Thyroid gland (tissue), 4 donors: ENCODE measurements at regions of chr13 and their contacts with region 1.

Region 1: DNA sequence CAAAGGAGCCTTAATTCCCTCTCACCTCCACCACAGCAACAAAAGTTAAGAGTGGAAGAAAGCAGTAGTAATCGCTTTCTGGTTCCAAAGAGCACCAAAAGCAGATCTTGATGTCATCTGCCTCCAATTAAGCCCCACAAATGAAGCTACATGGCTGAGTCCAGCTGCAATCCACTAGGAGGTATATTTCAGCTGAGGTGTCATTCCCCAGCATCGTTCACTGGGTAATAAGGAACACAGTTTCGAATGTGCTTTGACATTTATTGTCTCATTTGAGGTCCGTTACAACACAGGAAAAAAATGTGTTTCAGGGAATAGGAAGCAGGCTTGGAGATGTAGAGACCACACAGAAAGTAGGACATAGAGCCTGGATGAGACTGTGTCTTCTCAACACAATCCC is 190.4 kb downstream of the DCLK1 start:
- DNase-seq: no peak
- H3K4me3 ChIP-seq: no peak overlapping the region
- H3K27ac ChIP-seq: no peak overlapping the region
- H3K4me1 ChIP-seq: no peaks in the 10 kb centered on the region
- H3K27me3 ChIP-seq: no peaks in the 10 kb centered on the region
- CTCF ChIP-seq: no peak
- POLR2A ChIP-seq: no peak

Region 2: GRCh38 chr13:35499196-35500060 is 441.3 kb before region 1 on chr13:
- intact Hi-C with region 1: no loop called
- DNase-seq: peak in 1 of 2 donors; percentile 21
- H3K4me3 ChIP-seq: no peak overlapping the region
- H3K27ac ChIP-seq: no peak overlapping the region
- H3K4me1 ChIP-seq: peaks cover 9 to 14% of the 10 kb centered on the region in 2 donors
- H3K27me3 ChIP-seq: no peaks in the 10 kb centered on the region
- CTCF ChIP-seq: no peak
- POLR2A ChIP-seq: no peak

Region 3: DNA sequence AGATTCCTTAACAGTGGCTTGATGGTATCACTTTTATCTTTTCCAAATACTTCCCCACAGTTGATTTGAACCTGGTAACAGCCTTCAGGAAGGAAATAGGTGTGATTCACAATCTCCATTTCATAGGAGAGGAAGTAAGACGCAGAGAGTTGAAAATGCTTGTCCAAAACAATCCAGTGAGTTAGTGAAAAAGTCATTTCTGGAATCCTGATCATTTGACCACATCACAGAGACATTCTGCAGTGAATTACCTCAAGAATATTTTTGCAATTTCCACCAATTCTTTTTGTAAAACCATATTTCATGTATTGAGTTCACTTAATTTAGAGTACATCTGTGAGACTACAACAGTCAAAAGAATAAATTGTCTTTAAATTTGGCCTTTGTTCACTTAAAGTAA is 102.4 kb before region 1 on chr13:
- intact Hi-C with region 1: loop called (anchors 10 kb)
- DNase-seq: no peak
- H3K4me3 ChIP-seq: no peak overlapping the region
- H3K27ac ChIP-seq: no peak overlapping the region
- H3K4me1 ChIP-seq: no peaks in the 10 kb centered on the region
- H3K27me3 ChIP-seq: no peaks in the 10 kb centered on the region
- CTCF ChIP-seq: no peak
- POLR2A ChIP-seq: no peak

Region 4: GRCh38 chr13:36193151-36193855 is 252.6 kb after region 1 on chr13:
- intact Hi-C with region 1: no loop called
- DNase-seq: no peak
- H3K4me3 ChIP-seq: no peak overlapping the region
- H3K27ac ChIP-seq: no peak overlapping the region
- H3K4me1 ChIP-seq: no peaks in the 10 kb centered on the region
- H3K27me3 ChIP-seq: no peaks in the 10 kb centered on the region
- CTCF ChIP-seq: no peak
- POLR2A ChIP-seq: no peak

Region 5: GRCh38 chr13:36582977-36583376 is 642.2 kb after region 1 on chr13:
- intact Hi-C with region 1: no loop called
- DNase-seq: no peak
- H3K4me3 ChIP-seq: no peak overlapping the region
- H3K27ac ChIP-seq: no peak overlapping the region
- H3K4me1 ChIP-seq: no peaks in the 10 kb centered on the region
- H3K27me3 ChIP-seq: no peaks in the 10 kb centered on the region
- CTCF ChIP-seq: no peak
- POLR2A ChIP-seq: no peak